ENCODE measurements at regions of chr7 and their contacts with region 1.

Region 1: GRCh38 chr7:3092468-3092867 is 48.8 kb upstream of the CARD11 start:
- DNase-seq: peak; percentile 46 to 88 (median 76)
- ATAC-seq: peak; percentile 78 to 84
- H3K4me3 Mint-ChIP-seq: peak overlapping the region; percentile 56 to 87 (median 76)
- H3K27ac Mint-ChIP-seq: peak overlapping the region; percentile 92 to 99 (median 96)
- H3K4me1 Mint-ChIP-seq: peaks cover 29 to 79% (median 67%) of the 10 kb centered on the region in 4 donors
- H3K27me3 Mint-ChIP-seq: no peaks in the 10 kb centered on the region

Region 2: GRCh38 chr7:3042861-3043489 is 49.5 kb before region 1 on chr7:
- POLR2A ChIA-PET with region 1: interaction called, 22 read pairs
- DNase-seq: peak; percentile 41 to 81 (median 60)
- ATAC-seq: peak; percentile 65 to 72
- H3K4me3 Mint-ChIP-seq: peak overlapping the region; percentile 90 to 96 (median 93)
- H3K27ac Mint-ChIP-seq: peak overlapping the region; percentile 87 to 96 (median 93)
- H3K4me1 Mint-ChIP-seq: peaks cover 28 to 70% (median 63%) of the 10 kb centered on the region in 4 donors
- H3K27me3 Mint-ChIP-seq: no peaks in the 10 kb centered on the region

Region 3: DNA sequence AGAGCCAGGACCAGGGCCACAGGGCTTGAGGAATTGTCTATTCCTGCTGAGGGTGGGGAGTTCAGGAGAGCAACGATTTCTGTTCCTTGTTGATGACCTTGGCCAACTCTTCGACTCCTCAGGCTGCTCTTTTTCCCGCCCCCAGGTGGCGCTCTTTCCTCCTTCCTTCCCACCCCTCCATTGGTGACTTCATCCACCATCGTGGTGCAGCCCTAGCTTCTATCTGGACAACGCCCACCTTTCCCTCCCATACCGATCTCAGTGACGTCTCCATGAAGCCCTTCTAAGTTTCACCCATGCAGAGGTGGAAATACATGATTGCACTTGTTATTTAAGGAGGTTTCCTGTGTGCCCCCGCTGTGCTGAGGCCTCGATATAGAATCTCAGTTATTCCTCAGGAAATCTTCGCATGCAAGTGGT is 26.7 kb before region 1 on chr7:
- POLR2A ChIA-PET with region 1: interaction called, 86 read pairs
- DNase-seq: peak; percentile 25 to 78 (median 53)
- ATAC-seq: peak; percentile 51 to 56
- H3K4me3 Mint-ChIP-seq: peak overlapping the region; percentile 39 to 87 (median 72)
- H3K27ac Mint-ChIP-seq: peak overlapping the region; percentile 85 to 95 (median 92)
- H3K4me1 Mint-ChIP-seq: peaks cover 51 to 88% (median 81%) of the 10 kb centered on the region in 4 donors
- H3K27me3 Mint-ChIP-seq: no peaks in the 10 kb centered on the region

Region 4: DNA sequence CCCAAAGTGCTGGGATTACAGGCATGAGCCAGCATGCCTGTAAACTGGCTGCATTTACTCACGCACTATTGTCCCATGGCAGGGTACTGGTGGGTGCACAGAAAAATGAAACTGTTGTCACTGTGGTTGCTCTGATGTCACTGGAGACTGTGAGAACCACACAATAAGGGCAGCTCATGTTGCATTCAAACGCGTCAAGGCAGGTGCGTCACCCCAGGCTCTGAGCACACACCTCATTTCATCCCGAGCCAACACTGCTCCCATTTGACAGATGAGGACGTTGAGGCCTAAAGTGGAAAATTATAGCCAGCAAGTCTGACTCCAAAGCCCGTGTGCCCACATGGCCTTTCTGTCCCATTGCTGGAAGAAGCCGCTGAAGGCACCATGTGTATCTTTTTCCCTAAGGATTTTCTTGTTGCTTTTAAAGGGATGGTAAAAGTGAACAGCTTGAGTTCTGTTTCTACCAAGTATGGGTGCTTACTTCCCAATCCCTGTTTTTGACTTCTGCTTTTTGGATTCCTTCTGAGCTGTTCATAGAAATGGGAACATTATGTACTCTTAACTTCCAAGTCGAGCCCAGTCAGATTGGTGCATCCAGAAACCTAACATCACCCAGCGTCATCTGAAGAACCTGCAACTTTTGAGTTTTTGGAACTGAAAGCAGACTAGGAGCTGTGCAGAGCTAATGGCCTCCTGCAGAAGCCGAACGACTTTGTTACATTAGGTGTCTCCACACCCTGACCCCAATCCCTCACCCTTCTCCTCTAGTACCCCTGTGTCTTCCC is 11.3 kb after region 1 on chr7:
- POLR2A ChIA-PET with region 1: interaction called, 24 read pairs
- DNase-seq: peak in 3 of 10 donors; percentile 13 to 46 (median 30)
- ATAC-seq: peak; percentile 44 to 90
- H3K4me3 Mint-ChIP-seq: peak overlapping the region in 4 of 10 donors; percentile 23 to 58 (median 46)
- H3K27ac Mint-ChIP-seq: peak overlapping the region in 8 of 10 donors; percentile 30 to 86 (median 62)
- H3K4me1 Mint-ChIP-seq: peaks cover 16 to 69% (median 57%) of the 10 kb centered on the region in 4 donors
- H3K27me3 Mint-ChIP-seq: no peaks in the 10 kb centered on the region

Region 5: GRCh38 chr7:3117488-3118231 is 25.2 kb after region 1 on chr7:
- POLR2A ChIA-PET with region 1: interaction called, 43 read pairs
- DNase-seq: peak in 6 of 10 donors; percentile 14 to 54 (median 33)
- ATAC-seq: peak; percentile 70 to 83
- H3K4me3 Mint-ChIP-seq: peak overlapping the region in 7 of 10 donors; percentile 80 to 95 (median 91)
- H3K27ac Mint-ChIP-seq: peak overlapping the region in 8 of 10 donors; percentile 76 to 97 (median 92)
- H3K4me1 Mint-ChIP-seq: peaks cover 27 to 70% (median 42%) of the 10 kb centered on the region in 4 donors
- H3K27me3 Mint-ChIP-seq: no peaks in the 10 kb centered on the region

Region 6: DNA sequence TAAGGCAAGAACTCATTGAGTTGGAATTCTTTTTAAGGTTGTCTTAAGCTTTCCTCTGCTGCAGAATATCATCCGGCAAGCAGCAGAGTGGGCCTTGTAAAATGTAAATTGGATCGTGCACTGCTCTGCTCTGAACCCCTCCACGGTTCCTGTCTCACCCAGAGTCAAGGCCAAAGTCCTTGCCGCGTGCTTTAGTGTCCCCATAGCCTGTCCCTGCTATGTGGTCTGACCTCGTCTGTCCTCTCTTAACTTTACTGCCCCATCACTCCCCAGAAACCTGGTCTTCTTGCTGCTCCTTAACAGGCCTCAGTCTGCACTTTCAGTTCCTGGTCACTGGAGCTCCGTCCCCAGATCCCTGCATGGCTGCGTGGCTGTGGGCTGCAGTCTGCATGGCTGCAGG is 87.0 kb after region 1 on chr7:
- POLR2A ChIA-PET with region 1: no interaction called
- DNase-seq: no peak
- ATAC-seq: no peak
- H3K4me3 Mint-ChIP-seq: peak overlapping the region in 1 of 10 donors; percentile 29
- H3K27ac Mint-ChIP-seq: no peak overlapping the region
- H3K4me1 Mint-ChIP-seq: no peaks in the 10 kb centered on the region
- H3K27me3 Mint-ChIP-seq: no peaks in the 10 kb centered on the region

Region 7: DNA sequence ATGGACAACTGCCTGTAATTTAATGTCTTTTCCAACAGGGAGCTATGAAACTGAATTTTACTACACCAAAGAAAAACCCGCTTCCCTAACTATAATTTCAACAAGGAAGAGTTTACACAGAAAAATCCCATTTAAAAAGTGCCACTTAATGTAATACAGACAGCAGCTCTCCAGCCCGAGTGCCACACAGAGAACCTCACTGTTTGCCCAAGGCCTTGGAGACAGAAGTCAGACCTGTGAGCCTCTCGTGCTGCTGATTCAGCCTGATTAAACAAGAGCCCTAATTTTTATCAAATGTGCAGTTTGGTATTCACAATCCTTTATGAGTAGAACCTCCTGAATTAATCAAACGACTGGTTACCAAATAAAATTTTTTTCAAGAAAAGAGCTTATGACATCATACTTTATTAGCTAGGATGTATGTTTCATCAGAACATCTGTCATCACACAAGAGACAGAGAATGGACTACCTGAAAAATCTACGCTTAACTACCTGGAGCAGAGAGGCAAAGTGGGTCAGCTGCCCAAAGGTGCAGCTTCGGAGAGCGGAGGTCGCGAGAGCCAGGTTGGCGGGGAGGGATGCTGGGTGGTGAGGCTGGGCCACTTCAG is 752.2 kb after region 1 on chr7:
- POLR2A ChIA-PET with region 1: no interaction called
- DNase-seq: no peak
- ATAC-seq: no peak
- H3K4me3 Mint-ChIP-seq: no peak overlapping the region
- H3K27ac Mint-ChIP-seq: no peak overlapping the region
- H3K4me1 Mint-ChIP-seq: no peaks in the 10 kb centered on the region
- H3K27me3 Mint-ChIP-seq: peaks cover 0 to 8% (median 2%) of the 10 kb centered on the region in 5 donors